ENCODE measurements at regions of chr9 and their contacts with region 1.

Region 1: GRCh38 chr9:88578121-88579054 is 43.4 kb downstream of the NXNL2 start:
- DNase-seq: peak; percentile 94
- ATAC-seq: peak; percentile 93

Region 2: GRCh38 chr9:88106491-88106890 is 471.9 kb before region 1 on chr9:
- intact Hi-C with region 1: loop called (anchors 10 kb)
- DNase-seq: no peak
- ATAC-seq: peak; percentile 74

Region 3: GRCh38 chr9:88502552-88503034 is 75.8 kb before region 1 on chr9:
- intact Hi-C with region 1: loop called (anchors 2 kb)
- DNase-seq: no peak
- ATAC-seq: no peak